Upper lobe of right lung (tissue), 1 donor: ENCODE measurements at regions of chr4 and their contacts with region 1.

Region 1: GRCh38 chr4:146333187-146333894 is 119.0 kb downstream of the REELD1 start:
- DNase-seq: no peak
- ATAC-seq: peak; percentile 66
- H3K4me3 ChIP-seq: no peak overlapping the region
- H3K27ac ChIP-seq: no peak overlapping the region
- H3K4me1 ChIP-seq: peaks cover 6% of the 10 kb centered on the region
- H3K27me3 ChIP-seq: no peaks in the 10 kb centered on the region
- CTCF ChIP-seq: no peak

Region 2: GRCh38 chr4:146235654-146236177 is 97.6 kb before region 1 on chr4:
- intact Hi-C with region 1: no loop called
- DNase-seq: no peak
- ATAC-seq: peak; percentile 80
- H3K4me3 ChIP-seq: no peak overlapping the region
- H3K27ac ChIP-seq: peak overlapping the region; percentile 49
- H3K4me1 ChIP-seq: no peaks in the 10 kb centered on the region
- H3K27me3 ChIP-seq: no peaks in the 10 kb centered on the region
- CTCF ChIP-seq: no peak

Region 3: GRCh38 chr4:146273204-146273901 is 60.0 kb before region 1 on chr4:
- intact Hi-C with region 1: no loop called
- DNase-seq: no peak
- ATAC-seq: no peak
- H3K4me3 ChIP-seq: no peak overlapping the region
- H3K27ac ChIP-seq: no peak overlapping the region
- H3K4me1 ChIP-seq: no peaks in the 10 kb centered on the region
- H3K27me3 ChIP-seq: no peaks in the 10 kb centered on the region
- CTCF ChIP-seq: no peak

Region 4: DNA sequence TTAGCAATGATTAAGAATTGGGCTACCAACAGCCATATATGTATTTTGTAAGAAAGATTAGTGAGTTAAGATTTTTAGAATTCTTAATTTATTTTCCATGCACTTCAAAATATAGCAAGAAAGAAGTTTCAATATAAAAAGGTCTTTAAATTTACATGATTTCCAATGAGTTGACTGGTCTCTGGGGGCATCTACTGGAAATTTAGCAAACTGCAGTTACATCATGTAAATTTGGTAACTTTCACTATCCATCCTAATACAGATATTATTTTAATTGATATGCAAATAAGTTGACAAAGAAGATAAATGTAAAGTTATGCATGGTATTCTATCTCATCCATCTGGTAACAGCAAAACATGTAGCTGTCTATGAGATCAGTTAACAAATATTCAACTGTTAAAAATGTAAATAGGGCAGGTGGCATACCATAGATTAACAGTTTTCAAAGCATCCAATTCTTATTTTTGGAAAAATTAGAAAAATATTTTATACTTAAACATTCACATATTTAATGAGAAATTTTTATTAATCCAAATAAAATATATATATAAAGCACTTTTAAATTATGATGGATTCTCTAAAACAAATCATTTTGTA is 583.2 kb after region 1 on chr4:
- intact Hi-C with region 1: loop called (anchors 10 kb)
- DNase-seq: no peak
- ATAC-seq: peak; percentile 36
- H3K4me3 ChIP-seq: no peak overlapping the region
- H3K27ac ChIP-seq: no peak overlapping the region
- H3K4me1 ChIP-seq: no peaks in the 10 kb centered on the region
- H3K27me3 ChIP-seq: peaks cover 17% of the 10 kb centered on the region
- CTCF ChIP-seq: peak; percentile 79